Activated CD4-positive, alpha-beta T cell treated with anti-CD3 and anti-CD28 coated beads, Interleukin-2, amount 10 ng/mL, durations not matched to agents 24 days and 14 days (primary cell): ENCODE measurements at regions of chr6 and their contacts with region 1.

Region 1: DNA sequence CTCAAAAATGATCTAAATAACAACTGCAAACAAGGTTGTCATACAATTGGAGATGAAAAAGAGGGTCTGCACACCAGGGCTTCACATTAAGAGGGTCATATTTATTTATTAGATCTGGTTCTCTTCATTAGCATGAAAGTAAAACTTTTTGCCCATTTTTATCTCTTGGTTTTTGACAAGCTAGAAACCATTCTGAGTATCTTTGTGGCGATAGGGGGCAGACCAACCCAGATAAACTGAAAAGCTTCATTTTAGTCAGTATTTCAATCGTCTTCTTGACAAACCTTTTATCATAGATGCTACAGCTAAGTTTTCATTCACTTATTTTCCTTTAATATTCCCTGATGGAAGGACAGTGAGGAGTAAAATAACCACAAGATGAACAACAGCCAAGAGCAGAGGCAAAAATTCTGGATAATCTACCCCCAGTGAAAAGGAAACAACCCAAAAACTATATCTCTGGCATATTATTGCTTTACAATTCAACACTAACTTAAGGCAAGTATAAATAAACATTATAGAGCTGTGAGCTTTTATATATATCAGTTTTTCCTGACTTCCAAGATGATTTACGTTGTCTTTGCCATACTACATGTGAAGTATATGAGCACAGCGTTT is 45.2 kb downstream of the THEMIS start:
- DNase-seq: peak; percentile 79
- H3K4me3 Mint-ChIP-seq: no peak overlapping the region
- H3K27ac Mint-ChIP-seq: peak overlapping the region; percentile 42
- H3K4me1 Mint-ChIP-seq: peaks cover 37% of the 10 kb centered on the region
- H3K27me3 Mint-ChIP-seq: no peaks in the 10 kb centered on the region

Region 2: DNA sequence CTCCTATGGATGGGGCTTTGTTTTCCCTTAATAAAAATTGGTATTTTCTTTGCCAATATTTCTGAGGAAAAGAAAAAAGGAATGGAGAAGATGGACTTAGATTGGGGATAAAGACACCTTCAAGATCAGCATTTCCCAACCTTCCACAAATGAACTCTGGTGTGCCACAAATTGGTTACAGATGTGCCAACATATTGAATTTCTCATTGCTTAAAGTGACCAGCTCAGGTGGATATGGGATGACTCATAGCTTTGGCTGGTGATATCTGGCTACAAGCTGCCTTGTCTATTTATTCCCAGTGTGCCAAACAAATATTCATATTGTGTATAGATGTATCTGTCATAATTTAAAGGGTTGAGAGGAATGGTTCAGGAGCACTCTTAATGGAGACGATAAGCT is 12.7 kb after region 1 on chr6:
- intact Hi-C with region 1: no loop called
- DNase-seq: no peak
- H3K4me3 Mint-ChIP-seq: no peak overlapping the region
- H3K27ac Mint-ChIP-seq: no peak overlapping the region
- H3K4me1 Mint-ChIP-seq: peaks cover 41% of the 10 kb centered on the region
- H3K27me3 Mint-ChIP-seq: no peaks in the 10 kb centered on the region

Region 3: GRCh38 chr6:127879685-127880084 is 24.0 kb after region 1 on chr6:
- intact Hi-C with region 1: loop called (anchors 1 kb)
- DNase-seq: no peak
- H3K4me3 Mint-ChIP-seq: peak overlapping the region; percentile 61
- H3K27ac Mint-ChIP-seq: no peak overlapping the region
- H3K4me1 Mint-ChIP-seq: peaks cover 43% of the 10 kb centered on the region
- H3K27me3 Mint-ChIP-seq: no peaks in the 10 kb centered on the region

Region 4: GRCh38 chr6:128098000-128098581 is 242.4 kb after region 1 on chr6:
- intact Hi-C with region 1: loop called (anchors 10 kb)
- DNase-seq: peak; percentile 57
- H3K4me3 Mint-ChIP-seq: no peak overlapping the region
- H3K27ac Mint-ChIP-seq: peak overlapping the region; percentile 64
- H3K4me1 Mint-ChIP-seq: peaks cover 20% of the 10 kb centered on the region
- H3K27me3 Mint-ChIP-seq: no peaks in the 10 kb centered on the region

Region 5: DNA sequence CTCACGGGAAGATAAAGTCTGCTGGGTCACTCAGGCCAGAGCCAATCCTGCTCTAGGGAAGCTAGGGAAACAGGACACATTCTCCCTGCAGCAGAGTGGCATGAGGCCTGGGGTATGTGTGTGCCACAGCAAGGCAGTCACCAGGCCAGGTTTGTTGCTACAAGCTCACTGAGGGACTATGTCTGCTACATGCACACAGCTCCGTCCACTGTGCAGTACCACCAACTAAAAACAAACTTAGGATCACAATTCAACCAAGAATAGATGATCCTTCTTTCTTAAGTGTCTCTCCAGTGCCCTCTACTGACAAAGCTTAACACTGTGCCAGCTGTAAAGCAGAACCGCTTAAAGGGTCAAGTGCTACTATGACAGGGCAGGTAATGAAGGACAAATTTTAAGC is 472.2 kb after region 1 on chr6:
- intact Hi-C with region 1: loop called (anchors 2 kb)
- DNase-seq: peak; percentile 81
- H3K4me3 Mint-ChIP-seq: no peak overlapping the region
- H3K27ac Mint-ChIP-seq: no peak overlapping the region
- H3K4me1 Mint-ChIP-seq: no peaks in the 10 kb centered on the region
- H3K27me3 Mint-ChIP-seq: peaks cover 1% of the 10 kb centered on the region

Region 6: DNA sequence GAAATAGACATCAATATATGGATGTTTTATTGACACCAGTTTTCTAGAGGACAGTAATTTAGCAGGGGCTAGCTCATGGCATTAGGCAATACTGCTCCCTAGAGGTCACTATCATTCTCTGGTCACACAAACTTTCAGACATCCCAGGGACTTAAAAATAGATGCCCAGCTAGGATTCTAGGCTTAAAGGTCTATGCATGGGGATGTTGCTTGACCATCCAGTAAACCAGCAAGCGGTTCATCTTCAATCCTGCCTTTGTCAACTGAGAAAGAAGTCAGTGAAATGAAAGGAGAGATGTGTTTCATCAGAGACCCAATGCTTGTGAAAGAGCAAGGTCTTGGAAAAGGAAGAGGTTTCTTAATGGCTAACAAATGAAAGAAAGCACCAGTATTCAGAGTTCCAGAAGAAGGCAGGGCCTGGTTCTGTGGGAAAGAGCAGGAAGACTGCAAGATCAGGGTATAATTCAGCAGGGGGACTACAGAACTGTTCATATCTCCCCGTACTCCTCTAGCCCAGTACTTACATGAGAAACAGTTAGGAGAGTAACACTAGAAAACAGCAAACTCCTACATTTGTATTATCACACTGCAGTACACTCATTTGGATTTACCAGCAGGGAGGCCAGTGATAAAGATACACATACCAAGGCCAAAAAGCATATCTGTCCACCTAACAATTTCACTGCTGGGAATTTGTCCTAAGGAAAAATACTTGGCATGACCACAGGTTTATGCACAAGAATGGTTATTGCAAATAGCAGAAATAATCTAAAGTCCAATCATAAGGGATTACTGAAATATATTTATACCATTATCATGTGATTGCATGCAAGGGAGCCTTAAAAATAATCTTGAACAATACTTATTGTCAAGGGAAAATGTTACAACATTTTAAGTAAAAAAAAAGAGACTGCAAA is 875.9 kb after region 1 on chr6:
- intact Hi-C with region 1: loop called (anchors 10 kb)
- DNase-seq: no peak
- H3K4me3 Mint-ChIP-seq: no peak overlapping the region
- H3K27ac Mint-ChIP-seq: no peak overlapping the region
- H3K4me1 Mint-ChIP-seq: peaks cover 2% of the 10 kb centered on the region
- H3K27me3 Mint-ChIP-seq: peaks cover 4% of the 10 kb centered on the region